ENCODE measurements at regions of chr3 and their contacts with region 1.

Region 1: GRCh38 chr3:98556164-98557130 is 24.7 kb downstream of the GPR15 start:
- DNase-seq: peak; percentile 84
- H3K4me3 Mint-ChIP-seq: peak overlapping the region; percentile 77
- H3K27ac Mint-ChIP-seq: peak overlapping the region; percentile 93
- H3K4me1 Mint-ChIP-seq: peaks cover 75% of the 10 kb centered on the region
- H3K27me3 Mint-ChIP-seq: no peaks in the 10 kb centered on the region

Region 2: GRCh38 chr3:97981886-97982285 is 574.6 kb before region 1 on chr3:
- intact Hi-C with region 1: loop called (anchors 5 kb)
- DNase-seq: no peak
- H3K4me3 Mint-ChIP-seq: peak overlapping the region; percentile 1
- H3K27ac Mint-ChIP-seq: peak overlapping the region; percentile 70
- H3K4me1 Mint-ChIP-seq: peaks cover 27% of the 10 kb centered on the region
- H3K27me3 Mint-ChIP-seq: no peaks in the 10 kb centered on the region

Region 3: DNA sequence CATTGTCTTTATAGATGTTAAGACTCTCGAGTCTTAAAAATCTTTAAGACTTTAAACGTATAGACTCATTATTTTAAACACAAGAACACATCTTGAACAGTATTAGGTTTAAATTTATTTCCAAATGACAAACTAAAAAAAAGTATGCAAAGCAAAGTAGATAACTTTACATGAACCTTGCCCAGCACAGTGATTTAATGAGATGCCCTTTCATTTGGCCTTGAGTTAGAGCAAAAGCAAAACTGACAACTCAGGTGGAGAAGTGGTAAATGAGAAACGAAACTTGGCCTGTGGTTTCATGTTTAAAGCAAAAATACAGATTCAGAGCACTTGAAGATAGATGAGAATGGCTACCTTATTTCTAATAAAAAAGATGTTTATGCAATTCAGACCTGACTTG is 16.1 kb before region 1 on chr3:
- intact Hi-C with region 1: loop called (anchors 1 kb)
- DNase-seq: no peak
- H3K4me3 Mint-ChIP-seq: no peak overlapping the region
- H3K27ac Mint-ChIP-seq: peak overlapping the region; percentile 17
- H3K4me1 Mint-ChIP-seq: peaks cover 63% of the 10 kb centered on the region
- H3K27me3 Mint-ChIP-seq: no peaks in the 10 kb centered on the region

Region 4: DNA sequence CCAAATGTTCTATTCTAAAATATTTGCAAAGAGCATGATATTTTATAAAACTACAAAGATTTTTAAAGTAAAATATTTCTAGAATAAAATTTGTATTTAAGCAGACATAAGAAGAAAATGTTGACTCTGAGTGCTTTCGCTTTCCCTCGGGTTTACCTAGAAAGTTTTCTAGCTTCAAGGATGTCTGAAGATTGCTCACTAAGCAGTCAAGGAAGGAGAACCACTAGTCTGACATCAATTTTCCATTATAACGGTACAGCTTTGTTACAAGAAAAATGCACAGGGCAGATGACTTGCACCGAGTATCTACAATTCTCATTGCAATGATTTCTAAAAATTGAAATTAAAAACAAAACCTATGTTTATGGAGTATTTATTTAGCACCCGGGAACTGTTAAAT is 10.5 kb before region 1 on chr3:
- intact Hi-C with region 1: loop called (anchors 1 kb)
- DNase-seq: no peak
- H3K4me3 Mint-ChIP-seq: peak overlapping the region; percentile 71
- H3K27ac Mint-ChIP-seq: peak overlapping the region; percentile 97
- H3K4me1 Mint-ChIP-seq: peaks cover 69% of the 10 kb centered on the region
- H3K27me3 Mint-ChIP-seq: no peaks in the 10 kb centered on the region